WTC11 (cell line): ENCODE measurements at regions of chr11 and their contacts with region 1.

Region 1: DNA sequence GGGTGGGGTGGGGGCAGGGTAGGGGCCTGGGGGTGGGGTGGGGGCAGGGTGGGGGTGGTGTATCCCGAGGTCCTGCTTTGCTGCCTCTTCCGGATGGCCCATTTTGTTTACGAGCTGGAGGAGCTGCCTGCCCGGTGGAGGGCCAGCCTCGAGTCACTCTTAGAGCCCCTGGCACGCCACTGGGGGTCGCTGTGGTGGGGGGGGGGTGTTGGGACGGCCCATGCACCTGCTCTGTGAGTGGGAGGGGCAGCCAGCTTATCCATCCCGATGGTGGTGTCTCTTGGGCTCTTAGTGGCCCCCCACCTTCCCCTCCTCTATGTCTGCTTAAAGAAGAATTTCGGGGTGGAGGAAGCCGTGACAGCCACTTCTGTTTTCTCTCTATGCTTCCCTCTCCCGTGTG is 24.6 kb downstream of the MRGPRD start:
- DNase-seq: peak; percentile 49
- ATAC-seq: peak; percentile 72
- H3K4me3 Mint-ChIP-seq: no peak overlapping the region
- H3K27ac Mint-ChIP-seq: no peak overlapping the region
- H3K4me1 Mint-ChIP-seq: peaks cover 9% of the 10 kb centered on the region
- H3K27me3 Mint-ChIP-seq: no peaks in the 10 kb centered on the region
- CTCF ChIP-seq: no peak

Region 2: DNA sequence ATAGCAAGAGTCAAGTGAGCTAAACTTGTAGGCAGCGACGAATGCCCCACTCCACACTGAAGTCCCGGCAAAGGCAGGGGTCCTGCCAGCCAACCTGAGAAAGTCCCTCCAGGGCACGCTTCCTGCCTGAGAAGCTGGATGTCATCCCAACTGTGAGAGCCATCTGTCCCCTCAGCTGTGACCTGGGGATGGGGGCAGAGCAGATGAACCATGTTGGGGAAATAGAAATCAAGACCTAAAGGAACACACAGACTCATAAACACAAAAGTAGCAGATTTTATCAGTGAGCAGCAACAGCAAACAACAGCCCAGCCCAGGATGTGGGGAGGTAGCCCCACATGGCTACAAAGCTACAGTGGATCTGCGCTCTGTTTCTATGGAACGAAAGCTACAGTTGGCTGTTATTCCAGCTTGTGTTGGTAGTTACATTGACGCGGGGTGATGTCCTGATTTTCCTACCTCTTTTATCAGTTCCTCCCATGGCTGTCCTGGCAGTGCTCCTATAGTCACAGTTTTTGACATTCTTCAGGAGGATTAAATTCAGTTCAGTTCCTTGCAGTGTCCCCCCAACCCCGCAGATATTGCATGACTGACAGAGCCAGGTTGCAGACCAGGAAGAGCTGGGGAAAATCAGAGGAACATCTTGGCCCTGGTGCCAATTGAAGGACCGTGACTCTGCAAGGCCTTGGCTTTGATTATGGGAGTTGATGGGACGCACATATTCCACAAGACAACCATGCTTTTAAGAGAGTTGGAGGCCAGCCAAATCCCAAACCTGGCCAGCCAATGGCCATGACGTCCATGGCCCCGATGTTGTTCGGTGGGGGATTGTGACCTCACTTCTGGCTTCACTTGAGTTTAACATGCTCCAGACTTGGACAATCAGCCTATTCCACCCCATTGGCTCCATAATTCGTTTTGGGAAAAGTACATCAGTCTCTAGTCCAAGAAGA is 10.0 kb after region 1 on chr11:
- CTCF ChIA-PET with region 1: interaction called, 40 read pairs
- POLR2A ChIA-PET with region 1: no interaction called
- DNase-seq: no peak
- ATAC-seq: no peak
- H3K4me3 Mint-ChIP-seq: no peak overlapping the region
- H3K27ac Mint-ChIP-seq: no peak overlapping the region
- H3K4me1 Mint-ChIP-seq: peaks cover 6% of the 10 kb centered on the region
- H3K27me3 Mint-ChIP-seq: no peaks in the 10 kb centered on the region
- CTCF ChIP-seq: no peak

Region 3: GRCh38 chr11:68978931-68979594 is 22.9 kb after region 1 on chr11:
- CTCF ChIA-PET with region 1: interaction called, 10 read pairs
- POLR2A ChIA-PET with region 1: no interaction called
- DNase-seq: peak; percentile 5
- ATAC-seq: no peak
- H3K4me3 Mint-ChIP-seq: no peak overlapping the region
- H3K27ac Mint-ChIP-seq: no peak overlapping the region
- H3K4me1 Mint-ChIP-seq: peaks cover 10% of the 10 kb centered on the region
- H3K27me3 Mint-ChIP-seq: no peaks in the 10 kb centered on the region; the same call in 1 of the 2 replicates
- CTCF ChIP-seq: no peak

Region 4: GRCh38 chr11:69010964-69011623 is 55.0 kb after region 1 on chr11:
- CTCF ChIA-PET with region 1: interaction called, 31 read pairs
- POLR2A ChIA-PET with region 1: no interaction called
- DNase-seq: peak; percentile 85
- ATAC-seq: peak; percentile 82
- H3K4me3 Mint-ChIP-seq: peak overlapping the region; percentile 39
- H3K27ac Mint-ChIP-seq: no peak overlapping the region
- H3K4me1 Mint-ChIP-seq: peaks cover 41% of the 10 kb centered on the region
- H3K27me3 Mint-ChIP-seq: peaks cover 5% of the 10 kb centered on the region
- CTCF ChIP-seq: no peak